ENCODE measurements at regions of chr16 and their contacts with region 1.

Region 1: DNA sequence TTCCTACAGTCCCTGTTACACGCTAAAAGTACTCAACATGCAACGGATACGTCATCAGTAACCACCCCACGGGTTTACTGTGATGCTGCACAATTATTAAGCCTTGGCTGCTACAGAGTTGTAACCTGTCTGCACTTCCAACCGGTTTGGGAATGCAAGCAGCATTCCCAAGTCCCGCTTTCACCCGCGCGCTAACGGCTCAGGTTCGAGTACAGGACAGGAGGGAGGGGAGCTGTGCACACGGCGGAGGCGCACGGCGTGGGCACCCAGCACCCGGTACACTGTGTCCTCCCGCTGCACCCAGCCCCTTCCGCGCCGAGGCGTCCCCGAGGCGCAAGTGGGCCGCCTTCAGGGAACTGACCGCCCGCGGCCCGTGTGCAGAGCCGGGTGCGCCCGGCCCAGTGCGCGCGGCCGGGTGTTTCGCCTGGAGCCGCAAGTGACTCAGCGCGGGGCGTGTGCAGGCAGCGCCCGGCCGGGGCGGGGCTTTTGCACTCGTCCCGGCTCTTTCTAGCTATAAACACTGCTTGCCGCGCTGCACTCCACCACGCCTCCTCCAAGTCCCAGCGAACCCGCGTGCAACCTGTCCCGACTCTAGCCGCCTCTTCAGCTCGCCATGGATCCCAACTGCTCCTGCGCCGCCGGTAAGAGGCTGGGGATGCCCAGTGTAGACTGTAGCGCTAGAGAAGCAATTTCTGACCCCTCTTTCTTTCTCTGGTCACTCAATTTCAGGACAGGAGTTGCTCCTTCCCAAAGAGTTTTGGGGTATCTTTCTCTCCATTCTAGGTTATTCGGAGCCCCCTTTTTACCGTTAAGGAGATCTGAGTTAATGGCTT is at the start of gene MT2A:
- DNase-seq: peak; percentile 84 to 91 (median 89)
- H3K4me3 ChIP-seq: peak within 1 kb of the TSS; percentile 87 to 97 (median 87)
- H3K4me3 Mint-ChIP-seq: peak within 1 kb of the TSS; percentile 87 to 94
- H3K27ac ChIP-seq: peak within 1 kb of the TSS; percentile 81 to 93
- H3K27ac Mint-ChIP-seq: peak within 1 kb of the TSS; percentile 88 to 96 (median 94)
- H3K4me1 ChIP-seq: peaks cover 34 to 41% of the 10 kb centered on the region in 2 donors
- H3K4me1 Mint-ChIP-seq: peaks cover 43% of the 10 kb centered on the region
- H3K27me3 ChIP-seq: no peaks in the 10 kb centered on the region
- H3K27me3 Mint-ChIP-seq: peaks cover 2 to 3% (median 2%) of the 10 kb centered on the region in 3 donors
- CTCF ChIP-seq: no peak
- polyA plus RNA-seq, gene MT2A: 26.8 to 228 (median 126) TPM

Region 2: DNA sequence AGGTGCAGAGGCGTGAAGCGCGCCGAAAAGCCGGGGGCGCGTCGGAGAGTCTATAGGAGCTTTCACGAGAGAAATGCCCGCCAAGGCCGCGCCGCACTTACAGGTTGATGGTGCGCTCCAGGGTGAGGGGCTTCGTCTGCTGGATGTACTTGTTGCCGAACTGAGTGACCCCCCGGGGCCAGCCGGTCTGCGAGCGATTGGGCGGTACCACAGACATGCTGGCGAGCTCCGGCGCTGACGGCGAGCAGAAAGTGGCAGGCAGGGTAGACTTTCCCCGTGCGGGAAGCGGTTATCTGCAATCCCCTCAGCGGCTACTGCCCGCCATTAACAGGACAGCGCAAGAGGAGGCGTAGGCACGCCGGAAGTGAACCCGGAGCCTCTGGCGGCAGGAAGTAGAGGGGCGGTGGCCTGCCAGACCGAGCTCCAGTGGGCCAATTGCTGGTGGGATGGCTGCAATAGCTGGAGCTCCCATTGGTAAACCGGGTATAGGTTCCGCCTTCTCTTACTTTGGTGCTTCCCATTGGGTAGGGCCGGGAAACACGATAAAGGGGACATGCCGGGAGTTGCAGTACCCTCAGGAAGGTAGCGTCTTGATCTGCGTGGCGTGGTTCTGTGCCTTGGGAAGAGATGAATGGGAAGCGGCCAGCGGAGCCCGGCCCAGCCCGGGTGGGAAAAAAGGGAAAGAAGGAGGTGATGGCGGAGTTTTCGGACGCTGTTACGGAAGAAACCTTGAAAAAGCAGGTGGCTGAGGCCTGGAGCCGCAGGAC is 157.1 kb before region 1 on chr16 and contains the starts of genes NUDT21 and OGFOD1:
- intact Hi-C with region 1: loop called in 1 of 2 experiments (anchors 10 kb)
- DNase-seq: peak; percentile 94 to 98 (median 96)
- H3K4me3 ChIP-seq: peak within 1 kb of the TSS; percentile 74 to 87 (median 87)
- H3K4me3 Mint-ChIP-seq: peak within 1 kb of the TSS; percentile 99 to 100
- H3K27ac ChIP-seq: peak within 1 kb of the TSS; percentile 61 to 82
- H3K27ac Mint-ChIP-seq: peak within 1 kb of the TSS; percentile 90 to 99 (median 93)
- H3K4me1 ChIP-seq: peaks cover 20 to 26% of the 10 kb centered on the region in 2 donors
- H3K4me1 Mint-ChIP-seq: peaks cover 29% of the 10 kb centered on the region
- H3K27me3 ChIP-seq: no peaks in the 10 kb centered on the region
- H3K27me3 Mint-ChIP-seq: no peaks in the 10 kb centered on the region
- CTCF ChIP-seq: no peak
- polyA plus RNA-seq, gene NUDT21: 33.0 to 65.0 (median 55.9) TPM
- polyA plus RNA-seq, gene OGFOD1: 8.2 to 37.9 (median 23.4) TPM

Region 3: GRCh38 chr16:56708525-56709442 is 100.5 kb after region 1 on chr16:
- intact Hi-C with region 1: loop called (anchors 10 kb)
- DNase-seq: no peak
- H3K4me3 ChIP-seq: no peak overlapping the region
- H3K4me3 Mint-ChIP-seq: no peak overlapping the region
- H3K27ac ChIP-seq: no peak overlapping the region
- H3K27ac Mint-ChIP-seq: no peak overlapping the region
- H3K4me1 ChIP-seq: no peaks in the 10 kb centered on the region
- H3K4me1 Mint-ChIP-seq: no peaks in the 10 kb centered on the region
- H3K27me3 ChIP-seq: no peaks in the 10 kb centered on the region
- H3K27me3 Mint-ChIP-seq: peaks cover 11 to 12% (median 11%) of the 10 kb centered on the region in 3 donors
- CTCF ChIP-seq: no peak

Measured in CD14-positive monocyte (primary cell).